Motor neuron (in vitro differentiated cells): ENCODE measurements at regions of chr2 and their contacts with region 1.

Region 1: DNA sequence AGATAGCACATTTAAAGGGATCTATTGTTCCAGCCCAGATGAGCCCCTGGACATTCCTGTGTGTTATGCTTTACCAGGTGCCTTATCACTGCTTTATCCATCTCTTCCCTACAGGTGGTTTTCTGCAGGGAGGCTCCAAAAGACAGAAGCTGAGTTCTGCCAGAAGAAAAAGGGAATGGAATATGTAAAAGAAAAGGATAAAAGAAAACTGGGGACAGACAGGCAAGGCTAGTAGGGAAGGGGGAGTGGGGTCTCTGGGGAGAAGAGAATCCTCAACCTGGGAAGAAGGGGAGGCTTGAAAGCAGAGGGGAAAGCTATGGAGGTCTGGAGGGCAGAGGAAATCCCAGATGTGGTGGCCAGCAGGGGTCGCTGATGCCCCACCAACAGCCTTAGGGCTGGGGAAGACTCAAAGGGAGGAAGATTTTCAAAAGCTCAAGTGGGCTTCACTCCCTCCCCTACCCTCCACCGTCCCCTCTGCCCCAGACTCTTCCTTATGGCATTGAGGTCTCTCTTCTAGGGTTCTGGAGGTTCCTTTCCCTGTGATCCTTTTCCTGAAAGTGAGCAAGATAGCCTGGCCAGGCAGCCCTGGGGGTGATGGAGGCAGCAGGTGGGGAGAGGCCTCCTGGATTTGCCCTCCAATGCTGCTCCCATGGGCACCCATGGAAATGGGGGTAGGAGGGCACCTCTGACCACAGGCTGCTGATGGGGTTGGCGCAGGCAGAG is 178.1 kb upstream of the PKDCC start:
- ATAC-seq: peak; percentile 76 to 95 (median 88)
- H3K4me3 ChIP-seq: no peak overlapping the region
- H3K27ac ChIP-seq: no peak overlapping the region
- H3K4me1 ChIP-seq: peaks cover 11 to 22% of the 10 kb centered on the region in 2 donors

Region 2: DNA sequence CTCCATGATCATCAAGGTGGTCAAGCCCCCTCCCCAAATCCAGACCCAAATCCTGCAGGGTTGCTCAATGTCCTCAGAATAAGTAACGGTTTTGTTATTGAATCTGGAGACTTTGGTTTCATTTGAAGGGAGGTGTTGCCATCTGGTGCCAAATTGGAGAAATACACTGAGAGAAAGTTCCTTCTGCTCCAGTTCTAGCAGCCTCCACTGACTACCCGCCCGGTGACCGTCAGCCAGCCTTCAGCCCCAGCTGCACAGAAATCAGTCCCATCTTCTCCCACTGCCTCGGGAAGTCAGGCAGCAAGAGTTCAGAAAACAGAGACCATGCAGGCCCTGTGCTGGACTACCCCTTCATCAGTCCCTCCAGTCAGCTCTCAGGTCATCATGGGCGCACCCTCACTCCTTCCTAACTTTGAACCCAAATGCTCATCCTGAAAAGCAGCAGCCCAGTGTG is 216.8 kb after region 1 on chr2:
- in situ Hi-C with region 1: loop called (anchors 5 to 10 kb)
- ATAC-seq: peak; percentile 23 to 83 (median 62)
- H3K4me3 ChIP-seq: no peak overlapping the region
- H3K27ac ChIP-seq: no peak overlapping the region
- H3K4me1 ChIP-seq: peaks cover 0 to 16% of the 10 kb centered on the region in 2 donors

Region 3: GRCh38 chr2:42314892-42315467 is 445.3 kb after region 1 on chr2:
- in situ Hi-C with region 1: loop called in 2 of 9 experiments (anchors 25 kb)
- ATAC-seq: peak in 2 of 8 experiments; percentile 29 to 49
- H3K4me3 ChIP-seq: no peak overlapping the region
- H3K27ac ChIP-seq: no peak overlapping the region
- H3K4me1 ChIP-seq: no peaks in the 10 kb centered on the region

Region 4: DNA sequence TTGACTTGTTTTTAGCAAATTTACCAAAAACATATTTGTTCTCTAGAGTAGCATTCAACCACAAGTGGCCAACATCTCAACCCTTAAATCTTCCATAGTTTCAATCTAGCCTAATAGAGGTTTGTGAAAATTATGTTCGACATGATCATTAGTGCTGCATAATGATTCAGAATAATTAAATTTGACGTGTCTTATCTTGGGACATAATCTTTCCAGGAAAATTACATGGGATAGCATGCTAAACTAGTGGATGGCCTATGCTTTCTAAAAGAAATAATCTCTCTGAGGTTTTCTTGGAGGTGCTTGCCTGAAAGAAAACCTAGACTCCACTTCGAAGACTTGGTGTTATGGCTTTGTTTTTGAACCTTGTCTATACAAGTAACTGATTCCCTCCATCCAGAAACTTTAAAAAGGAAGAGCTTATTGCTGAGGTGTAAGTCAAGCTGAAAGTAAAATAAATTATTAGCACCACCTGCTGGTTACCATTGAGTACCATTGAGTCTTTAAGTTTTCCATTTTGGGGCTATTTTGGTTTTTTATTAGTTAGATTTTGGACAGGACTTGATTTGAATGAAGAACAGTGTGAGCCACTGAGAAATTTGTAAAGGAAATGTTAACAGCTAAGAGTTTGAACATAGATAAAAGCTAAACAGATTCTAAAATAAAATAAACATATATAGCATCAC is 458.6 kb after region 1 on chr2:
- in situ Hi-C with region 1: loop called in 3 of 9 experiments (anchors 25 kb)
- ATAC-seq: peak in 3 of 8 experiments; percentile 18 to 47 (median 28)
- H3K4me3 ChIP-seq: no peak overlapping the region
- H3K27ac ChIP-seq: no peak overlapping the region
- H3K4me1 ChIP-seq: peaks cover 0 to 4% of the 10 kb centered on the region in 2 donors

Region 5: DNA sequence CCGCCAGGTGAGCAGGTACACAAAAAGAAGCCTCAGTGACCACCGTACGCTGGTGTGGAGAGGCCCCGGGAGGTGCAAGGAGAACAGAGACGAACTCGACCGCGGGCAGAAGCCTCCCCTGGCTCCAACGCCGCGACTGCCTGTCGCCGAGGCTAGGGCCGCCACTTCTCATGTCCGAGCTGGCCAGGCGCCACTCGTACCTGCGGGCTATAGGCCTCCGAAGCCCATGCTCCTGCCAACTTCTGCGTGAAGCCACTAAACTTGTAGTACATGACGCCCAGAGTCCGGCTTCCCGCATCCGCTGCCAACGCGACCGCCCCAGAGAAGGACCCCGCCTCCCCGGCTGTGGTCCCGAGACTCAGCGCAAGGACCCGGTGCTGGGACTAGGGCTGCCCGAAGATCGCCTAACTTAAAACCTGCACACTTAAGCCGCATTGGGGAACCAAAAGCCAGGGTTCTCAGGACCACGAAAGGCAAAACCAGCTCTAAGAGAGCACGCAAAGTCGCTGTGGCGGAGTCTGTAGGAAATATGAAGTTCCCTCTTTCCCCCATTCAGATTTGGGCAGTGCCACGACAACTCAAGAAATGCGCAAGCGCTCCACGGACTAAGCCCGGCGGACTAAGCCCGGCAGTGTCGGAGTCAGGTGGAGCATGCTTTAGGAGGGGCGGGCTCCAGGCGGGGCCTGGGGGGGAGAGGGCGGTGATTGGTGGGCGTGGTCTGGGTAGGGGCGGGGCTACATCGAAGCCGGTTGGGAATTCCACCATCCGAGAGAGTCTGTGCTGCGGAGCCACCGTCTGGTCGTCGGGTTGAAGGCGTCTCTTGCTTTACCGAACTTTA is 491.4 kb after region 1 on chr2 and contains the start of gene COX7A2L:
- in situ Hi-C with region 1: loop called in 2 of 9 experiments (anchors 25 kb)
- ATAC-seq: peak; percentile 84 to 96 (median 94)
- H3K4me3 ChIP-seq: peak within 1 kb of the TSS; percentile 74 to 98 (median 82)
- H3K27ac ChIP-seq: peak within 1 kb of the TSS; percentile 97 to 98
- H3K4me1 ChIP-seq: peaks cover 12 to 22% of the 10 kb centered on the region in 2 donors
- total RNA-seq, gene COX7A2L: 97.5 to 299 (median 176) TPM